ENCODE measurements at regions of chr17 and their contacts with region 1.

Region 1: DNA sequence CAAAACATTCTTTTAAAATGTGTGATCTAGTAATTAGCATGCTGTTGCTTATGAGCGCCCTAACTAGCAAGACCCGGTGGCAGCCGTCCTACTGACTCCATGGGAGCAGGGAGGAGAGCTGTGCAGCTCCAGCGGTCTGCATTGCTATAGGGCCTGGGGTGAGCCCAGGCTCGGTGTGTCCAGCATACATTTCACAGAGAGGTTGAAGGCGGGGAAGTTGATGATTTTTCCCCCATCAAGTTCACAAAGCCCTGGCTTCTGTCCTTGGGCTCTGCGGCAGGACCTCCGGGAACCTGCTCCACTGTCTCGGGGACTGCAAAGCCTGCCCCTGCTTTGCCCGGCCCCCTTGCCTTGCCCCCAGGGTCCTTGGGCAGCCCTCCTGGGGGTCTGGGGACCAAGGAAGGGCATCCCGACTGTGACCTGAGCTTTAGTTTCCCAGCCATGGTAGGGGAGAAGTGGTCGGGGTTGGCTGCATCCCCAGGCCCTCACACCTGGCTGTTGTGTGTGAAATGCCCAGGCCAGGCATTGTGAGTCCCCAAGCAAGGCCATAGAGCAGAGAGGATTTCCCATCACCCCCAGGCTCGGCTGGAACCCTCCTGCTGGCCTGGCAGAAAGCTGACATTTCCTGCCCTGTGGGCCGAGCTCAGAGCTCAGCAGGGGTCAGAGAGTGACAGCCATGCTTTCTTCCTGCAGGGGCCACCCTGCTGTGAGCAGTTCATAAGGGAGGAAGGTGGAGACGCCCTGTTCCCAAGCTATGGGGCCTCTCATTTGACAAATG is 24.8 kb downstream of the KCNJ12 start:
- DNase-seq: no peak
- H3K4me3 ChIP-seq: no peak overlapping the region
- H3K27ac ChIP-seq: no peak overlapping the region
- H3K4me1 ChIP-seq: no peaks in the 10 kb centered on the region
- H3K27me3 ChIP-seq: no peaks in the 10 kb centered on the region
- CTCF ChIP-seq: no peak
- POLR2A ChIP-seq: no peak

Region 2: GRCh38 chr17:21214015-21214776 is 186.8 kb before region 1 on chr17 and contains the start of gene TMEM11:
- intact Hi-C with region 1: no loop called
- DNase-seq: peak; percentile 95 to 97 (median 96)
- H3K4me3 ChIP-seq: peak within 1 kb of the TSS; percentile 78 to 99 (median 92)
- H3K27ac ChIP-seq: peak within 1 kb of the TSS; percentile 82 to 95 (median 90)
- H3K4me1 ChIP-seq: peaks cover 23 to 48% of the 10 kb centered on the region in 2 donors
- H3K27me3 ChIP-seq: no peaks in the 10 kb centered on the region
- CTCF ChIP-seq: peak in 1 of 6 experiments; percentile 10
- POLR2A ChIP-seq: peak; percentile 34 to 43
- total RNA-seq, gene TMEM11: 12.4 to 75.8 (median 22.3) TPM

Region 3: DNA sequence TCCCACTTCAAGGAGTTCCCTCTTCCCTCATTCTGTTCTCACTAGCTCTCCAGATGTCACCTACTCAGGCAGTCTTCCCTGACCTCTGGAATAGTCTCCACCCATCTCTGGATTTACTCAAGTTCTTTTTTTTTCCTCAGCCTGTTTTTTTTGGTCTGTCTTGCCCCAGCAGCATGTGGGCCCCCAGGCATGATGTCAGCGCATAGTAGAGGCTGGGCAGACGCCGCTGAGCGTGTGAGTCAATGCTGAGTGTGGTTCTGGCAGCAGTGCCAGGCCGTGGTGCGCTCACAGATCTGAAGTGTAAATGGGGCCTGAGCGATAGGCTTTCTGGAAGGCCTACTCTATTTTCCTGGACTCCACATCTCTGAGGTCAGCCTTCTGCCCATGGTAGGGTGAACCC is 288.6 kb after region 1 on chr17:
- intact Hi-C with region 1: loop called (anchors 5 to 10 kb)
- DNase-seq: peak in 4 of 7 donors; percentile 52 to 78 (median 62)
- H3K4me3 ChIP-seq: no peak overlapping the region
- H3K27ac ChIP-seq: no peak overlapping the region
- H3K4me1 ChIP-seq: no peaks in the 10 kb centered on the region
- H3K27me3 ChIP-seq: no peaks in the 10 kb centered on the region
- CTCF ChIP-seq: no peak
- POLR2A ChIP-seq: no peak